Body of pancreas (tissue), 4 donors: ENCODE measurements at regions of chr9 and their contacts with region 1.

Region 1: GRCh38 chr9:806285-807156 is 35.0 kb upstream of the DMRT1 start:
- DNase-seq: peak in 1 of 4 donors; percentile 7
- ATAC-seq: no peak
- H3K4me3 ChIP-seq: no peak overlapping the region
- H3K27ac ChIP-seq: no peak overlapping the region
- H3K4me1 ChIP-seq: no peaks in the 10 kb centered on the region
- H3K27me3 ChIP-seq: no peaks in the 10 kb centered on the region
- CTCF ChIP-seq: peak; percentile 22 to 92 (median 72)
- POLR2A ChIP-seq: no peak

Region 2: GRCh38 chr9:366620-367019 is 439.9 kb before region 1 on chr9:
- intact Hi-C with region 1: loop called (anchors 10 kb)
- DNase-seq: no peak
- ATAC-seq: no peak
- H3K4me3 ChIP-seq: no peak overlapping the region
- H3K27ac ChIP-seq: no peak overlapping the region
- H3K4me1 ChIP-seq: no peaks in the 10 kb centered on the region
- H3K27me3 ChIP-seq: no peaks in the 10 kb centered on the region
- CTCF ChIP-seq: no peak
- POLR2A ChIP-seq: no peak